Naive thymus-derived CD4-positive, alpha-beta T cell (primary cell): ENCODE measurements at regions of chr12 and their contacts with region 1.

Region 1: GRCh38 chr12:91877022-91877421 is 268.6 kb downstream of the BTG1 start:
- DNase-seq: peak; percentile 51 to 97 (median 93)
- ATAC-seq: peak; percentile 94
- H3K4me3 ChIP-seq: peak overlapping the region; percentile 39
- H3K4me3 Mint-ChIP-seq: peak overlapping the region; percentile 77 to 88 (median 82)
- H3K27ac ChIP-seq: peak overlapping the region; percentile 92
- H3K27ac Mint-ChIP-seq: peak overlapping the region; percentile 95 to 100 (median 99)
- H3K4me1 ChIP-seq: peaks cover 59% of the 10 kb centered on the region in 2 donors
- H3K4me1 Mint-ChIP-seq: peaks cover 40 to 85% (median 80%) of the 10 kb centered on the region in 7 donors
- H3K27me3 ChIP-seq: no peaks in the 10 kb centered on the region
- H3K27me3 Mint-ChIP-seq: no peaks in the 10 kb centered on the region

Region 2: DNA sequence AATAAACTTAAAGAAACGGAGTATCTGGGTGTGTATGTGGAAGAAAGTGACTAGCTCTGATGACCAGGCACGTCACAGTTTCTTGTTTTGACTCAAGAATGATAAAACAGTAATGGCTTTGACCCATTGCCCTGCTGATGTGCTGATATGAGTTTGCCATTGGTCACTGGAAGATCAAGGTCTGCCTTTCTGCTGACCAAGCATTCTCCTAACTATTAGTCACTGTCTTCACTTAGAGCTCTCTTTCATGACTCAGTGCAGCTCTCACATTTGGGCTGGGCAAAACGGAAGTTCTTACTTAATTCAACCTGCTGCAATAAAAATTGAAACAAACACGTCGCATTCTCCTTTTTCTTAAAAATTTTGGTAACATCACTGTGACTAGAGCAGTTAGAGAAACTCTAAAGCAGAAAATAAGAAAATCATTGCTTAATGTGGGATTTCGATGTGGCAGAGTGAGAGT is 98.1 kb before region 1 on chr12:
- CTCF ChIA-PET with region 1: interaction called, 4 read pairs
- POLR2A ChIA-PET with region 1: interaction called, 12 read pairs
- intact Hi-C with region 1: loop called in 1 of 2 experiments (anchors 1 kb)
- DNase-seq: peak in 8 of 9 donors; percentile 14 to 47 (median 27)
- ATAC-seq: peak; percentile 75
- H3K4me3 ChIP-seq: peak overlapping the region; percentile 29
- H3K4me3 Mint-ChIP-seq: peak overlapping the region; percentile 72 to 92 (median 83)
- H3K27ac ChIP-seq: peak overlapping the region; percentile 67
- H3K27ac Mint-ChIP-seq: peak overlapping the region; percentile 91 to 97 (median 93)
- H3K4me1 ChIP-seq: peaks cover 10 to 35% of the 10 kb centered on the region in 2 donors
- H3K4me1 Mint-ChIP-seq: peaks cover 19 to 70% (median 50%) of the 10 kb centered on the region in 7 donors
- H3K27me3 ChIP-seq: no peaks in the 10 kb centered on the region
- H3K27me3 Mint-ChIP-seq: peaks cover 0 to 4% (median 3%) of the 10 kb centered on the region in 5 donors

Region 3: DNA sequence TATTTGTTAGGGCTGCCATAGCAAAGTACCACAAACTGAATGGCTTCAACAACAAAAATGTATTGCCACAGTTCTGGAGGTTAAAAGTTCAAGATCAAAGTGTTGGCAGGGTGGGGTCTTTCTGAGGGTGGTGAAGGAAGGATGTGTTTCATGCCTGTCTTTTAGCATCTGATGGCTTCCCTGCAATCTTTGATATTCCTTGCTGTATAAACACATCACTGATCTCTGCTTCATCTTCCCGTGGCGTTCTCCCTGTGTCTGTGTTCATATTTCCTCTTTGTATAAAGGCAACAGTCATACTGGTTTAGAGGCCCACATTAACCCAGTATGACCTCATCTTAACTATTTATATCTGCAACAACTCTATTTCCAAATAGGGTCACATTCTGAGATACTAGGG is 101.1 kb after region 1 on chr12:
- CTCF ChIA-PET with region 1: interaction called, 4 read pairs
- POLR2A ChIA-PET with region 1: interaction called, 11 read pairs
- intact Hi-C with region 1: loop called (anchors 1 kb)
- DNase-seq: peak in 7 of 9 donors; percentile 75 to 94 (median 85)
- ATAC-seq: peak; percentile 93
- H3K4me3 ChIP-seq: no peak overlapping the region
- H3K4me3 Mint-ChIP-seq: peak overlapping the region; percentile 3 to 62 (median 46)
- H3K27ac ChIP-seq: peak overlapping the region; percentile 64
- H3K27ac Mint-ChIP-seq: peak overlapping the region; percentile 58 to 96 (median 82)
- H3K4me1 ChIP-seq: peaks cover 6 to 16% of the 10 kb centered on the region in 2 donors
- H3K4me1 Mint-ChIP-seq: peaks cover 12 to 78% (median 48%) of the 10 kb centered on the region in 7 donors
- H3K27me3 ChIP-seq: no peaks in the 10 kb centered on the region
- H3K27me3 Mint-ChIP-seq: no peaks in the 10 kb centered on the region

Region 4: GRCh38 chr12:92059976-92060375 is 183.0 kb after region 1 on chr12:
- CTCF ChIA-PET with region 1: no interaction called
- POLR2A ChIA-PET with region 1: interaction called, 3 read pairs
- intact Hi-C with region 1: loop called in 1 of 2 experiments (anchors 5 kb)
- DNase-seq: no peak
- ATAC-seq: no peak
- H3K4me3 ChIP-seq: no peak overlapping the region
- H3K4me3 Mint-ChIP-seq: peak overlapping the region in 8 of 10 donors; percentile 6 to 79 (median 46)
- H3K27ac ChIP-seq: no peak overlapping the region
- H3K27ac Mint-ChIP-seq: peak overlapping the region in 8 of 9 donors; percentile 19 to 98 (median 93)
- H3K4me1 ChIP-seq: peaks cover 10 to 53% of the 10 kb centered on the region in 2 donors
- H3K4me1 Mint-ChIP-seq: peaks cover 39 to 99% (median 94%) of the 10 kb centered on the region in 7 donors
- H3K27me3 ChIP-seq: no peaks in the 10 kb centered on the region
- H3K27me3 Mint-ChIP-seq: no peaks in the 10 kb centered on the region

Region 5: DNA sequence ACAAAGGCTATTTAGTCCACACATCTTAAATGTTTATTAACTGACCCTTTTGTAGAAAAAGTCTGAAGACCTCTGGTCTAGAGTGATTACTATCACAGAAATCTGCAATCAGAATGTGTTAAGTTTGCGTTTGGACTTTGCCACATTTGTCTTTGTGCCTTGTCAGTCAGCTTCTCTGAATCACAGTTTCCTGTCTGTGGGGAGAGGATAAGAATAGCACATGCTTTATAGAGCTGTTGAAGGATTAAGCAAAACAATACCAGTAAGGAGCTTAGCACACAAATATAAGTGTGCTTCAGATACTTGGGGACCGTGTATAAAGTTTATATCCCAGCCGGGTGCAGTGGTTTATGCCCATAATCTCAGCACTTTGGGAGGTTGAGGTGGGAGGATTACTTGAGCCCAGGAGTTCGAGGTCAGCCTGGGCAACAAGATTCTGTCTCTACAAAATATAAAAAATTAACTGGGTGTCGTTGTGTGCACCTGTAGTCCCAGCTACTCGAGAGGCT is 331.6 kb after region 1 on chr12:
- CTCF ChIA-PET with region 1: interaction called, 5 read pairs
- POLR2A ChIA-PET with region 1: interaction called, 3 read pairs
- intact Hi-C with region 1: loop called in 1 of 2 experiments (anchors 2 kb)
- DNase-seq: peak in 7 of 9 donors; percentile 55 to 76 (median 63)
- ATAC-seq: peak; percentile 92
- H3K4me3 ChIP-seq: peak overlapping the region; percentile 29
- H3K4me3 Mint-ChIP-seq: peak overlapping the region; percentile 58 to 90 (median 76)
- H3K27ac ChIP-seq: peak overlapping the region; percentile 48
- H3K27ac Mint-ChIP-seq: peak overlapping the region; percentile 72 to 97 (median 95)
- H3K4me1 ChIP-seq: peaks cover 18 to 25% of the 10 kb centered on the region in 2 donors
- H3K4me1 Mint-ChIP-seq: peaks cover 19 to 55% (median 41%) of the 10 kb centered on the region in 7 donors
- H3K27me3 ChIP-seq: no peaks in the 10 kb centered on the region
- H3K27me3 Mint-ChIP-seq: no peaks in the 10 kb centered on the region

Region 6: DNA sequence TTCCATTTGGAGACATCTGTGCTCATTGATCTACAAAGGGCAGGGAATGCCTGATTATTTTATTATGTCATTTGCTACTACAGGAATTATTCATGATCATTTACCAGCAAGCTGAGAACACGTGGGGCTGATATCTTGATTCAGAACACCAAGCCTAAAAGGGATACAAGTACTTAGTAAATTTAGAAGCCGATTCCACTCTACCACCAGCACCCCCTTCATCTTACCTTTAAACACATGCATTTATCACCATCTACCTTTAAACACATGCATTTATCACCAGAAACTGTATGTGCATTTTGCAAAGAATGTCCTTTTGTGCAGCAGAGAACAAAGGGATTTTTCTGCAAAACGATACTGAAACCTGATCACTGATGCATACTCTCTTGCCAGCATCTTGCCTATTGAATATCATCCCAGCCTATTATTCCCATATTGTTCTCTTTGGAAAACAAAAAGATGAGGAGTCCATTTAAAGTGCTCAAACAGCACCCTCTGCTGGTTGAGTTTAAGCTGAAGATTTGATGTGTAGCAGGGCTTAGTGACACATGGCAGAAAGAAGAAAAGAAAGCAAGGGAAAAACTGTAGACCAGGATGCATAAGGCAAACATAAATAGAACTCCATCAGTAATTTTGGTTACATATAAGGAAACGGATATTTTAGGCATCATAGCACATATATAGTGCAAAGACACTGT is 693.2 kb after region 1 on chr12:
- CTCF ChIA-PET with region 1: interaction called, 4 read pairs
- POLR2A ChIA-PET with region 1: interaction called, 4 read pairs
- intact Hi-C with region 1: loop called (anchors 1 to 5 kb)
- DNase-seq: peak in 7 of 9 donors; percentile 67 to 86 (median 80)
- ATAC-seq: peak; percentile 92
- H3K4me3 ChIP-seq: no peak overlapping the region
- H3K4me3 Mint-ChIP-seq: no peak overlapping the region
- H3K27ac ChIP-seq: peak overlapping the region; percentile 52
- H3K27ac Mint-ChIP-seq: no peak overlapping the region
- H3K4me1 ChIP-seq: peaks cover 11 to 13% of the 10 kb centered on the region in 2 donors
- H3K4me1 Mint-ChIP-seq: peaks cover 0 to 37% (median 6%) of the 10 kb centered on the region in 7 donors
- H3K27me3 ChIP-seq: no peaks in the 10 kb centered on the region
- H3K27me3 Mint-ChIP-seq: no peaks in the 10 kb centered on the region